ENCODE measurements at regions of chr1 and their contacts with region 1.

Region 1: GRCh38 chr1:247331172-247331991 is at the start of gene ZNF496:
- DNase-seq: peak; percentile 78
- H3K4me3 ChIP-seq: peak within 1 kb of the TSS; percentile 57 to 82 (median 73)
- H3K27ac ChIP-seq: peak within 1 kb of the TSS; percentile 86
- H3K4me1 ChIP-seq: peaks cover 17% of the 10 kb centered on the region
- H3K27me3 ChIP-seq: no peaks in the 10 kb centered on the region
- CTCF ChIP-seq: no peak
- POLR2A ChIP-seq: peak; percentile 37
- total RNA-seq, gene ZNF496: 42.4 and 46.0 TPM in 2 replicates

Region 2: GRCh38 chr1:245874942-245875580 is 1456.3 kb before region 1 on chr1:
- CTCF ChIA-PET with region 1: no interaction called
- POLR2A ChIA-PET with region 1: no interaction called
- dilution Hi-C with region 1: no loop called
- intact Hi-C with region 1: loop called (anchors 5 kb)
- DNase-seq: peak; percentile 95
- H3K4me3 ChIP-seq: no peak overlapping the region
- H3K27ac ChIP-seq: peak overlapping the region; percentile 50
- H3K4me1 ChIP-seq: peaks cover 22% of the 10 kb centered on the region
- H3K27me3 ChIP-seq: no peaks in the 10 kb centered on the region
- CTCF ChIP-seq: no peak
- POLR2A ChIP-seq: no peak

Region 3: GRCh38 chr1:246907472-246907871 is 423.9 kb before region 1 on chr1:
- CTCF ChIA-PET with region 1: no interaction called
- POLR2A ChIA-PET with region 1: no interaction called
- dilution Hi-C with region 1: no loop called
- intact Hi-C with region 1: loop called (anchors 5 kb)
- DNase-seq: peak; percentile 63
- H3K4me3 ChIP-seq: no peak overlapping the region
- H3K27ac ChIP-seq: no peak overlapping the region
- H3K4me1 ChIP-seq: no peaks in the 10 kb centered on the region
- H3K27me3 ChIP-seq: no peaks in the 10 kb centered on the region
- CTCF ChIP-seq: peak; percentile 15 to 33
- POLR2A ChIP-seq: no peak

Region 4: DNA sequence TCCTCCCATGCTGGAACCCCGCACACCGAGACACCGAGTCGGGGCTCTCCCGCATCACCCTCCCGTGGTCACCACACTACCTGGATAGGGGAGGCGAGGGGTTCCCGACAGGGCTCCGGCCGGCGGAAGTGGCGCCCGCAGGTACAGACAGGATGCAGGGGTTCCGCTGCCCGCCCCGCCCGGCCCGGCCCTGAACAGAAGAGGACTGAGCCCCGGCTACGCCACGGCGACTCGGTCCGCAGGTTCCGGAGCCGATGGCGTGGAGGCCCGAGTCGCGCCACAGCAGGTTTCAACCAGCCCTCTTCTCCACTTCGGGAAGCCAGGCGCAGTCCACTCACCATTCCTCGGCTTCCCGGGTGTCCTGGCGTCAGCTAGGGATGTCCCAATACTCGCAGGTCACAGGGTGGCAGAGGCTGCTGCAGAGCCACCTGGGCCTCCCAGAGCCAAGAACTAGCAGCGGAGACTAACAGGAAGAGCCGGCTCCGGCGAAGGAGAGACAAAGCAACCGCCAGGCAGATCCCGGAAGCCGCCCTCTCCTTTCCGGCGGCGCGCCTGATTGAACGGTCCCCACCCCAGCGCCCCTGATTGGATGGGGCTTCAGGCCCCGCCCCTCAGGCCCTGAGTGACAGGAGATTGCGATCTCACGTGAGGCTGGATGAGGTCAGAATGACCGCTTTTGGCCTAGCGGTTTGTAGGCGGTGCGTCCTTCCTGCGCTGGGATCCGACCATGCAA is 227.4 kb before region 1 on chr1 and contains the start of gene ZNF669:
- CTCF ChIA-PET with region 1: no interaction called
- POLR2A ChIA-PET with region 1: no interaction called
- dilution Hi-C with region 1: no loop called
- intact Hi-C with region 1: loop called (anchors 2 kb)
- DNase-seq: peak; percentile 95
- H3K4me3 ChIP-seq: peak within 1 kb of the TSS; percentile 91 to 98 (median 91)
- H3K27ac ChIP-seq: peak within 1 kb of the TSS; percentile 82
- H3K4me1 ChIP-seq: peaks cover 4% of the 10 kb centered on the region
- H3K27me3 ChIP-seq: no peaks in the 10 kb centered on the region
- CTCF ChIP-seq: no peak
- POLR2A ChIP-seq: peak; percentile 83
- total RNA-seq, gene ZNF669: 7.8 and 9.7 TPM in 2 replicates

Region 5: DNA sequence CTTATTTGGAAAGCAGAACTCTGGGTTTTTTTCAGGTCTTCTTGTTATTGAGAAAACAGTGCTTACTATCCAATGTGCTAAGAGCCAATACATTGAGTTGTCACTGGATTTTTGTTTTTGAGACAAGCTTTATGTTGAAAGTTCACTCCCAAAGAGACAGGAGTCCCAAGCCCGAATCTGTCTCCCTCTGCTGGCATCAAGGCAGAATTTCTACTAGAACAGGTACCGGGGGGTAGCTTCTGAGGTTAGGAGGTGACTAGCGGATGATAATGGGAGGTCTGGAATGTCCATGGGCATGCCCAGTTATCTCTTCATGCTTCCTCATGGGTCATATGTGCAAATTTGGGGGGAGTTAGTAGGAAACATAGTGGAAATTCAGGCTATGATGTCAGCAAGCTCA is 184.7 kb before region 1 on chr1:
- CTCF ChIA-PET with region 1: no interaction called
- POLR2A ChIA-PET with region 1: no interaction called
- dilution Hi-C with region 1: no loop called
- intact Hi-C with region 1: no loop called
- DNase-seq: no peak
- H3K4me3 ChIP-seq: no peak overlapping the region
- H3K27ac ChIP-seq: no peak overlapping the region
- H3K4me1 ChIP-seq: no peaks in the 10 kb centered on the region
- H3K27me3 ChIP-seq: no peaks in the 10 kb centered on the region
- CTCF ChIP-seq: peak; percentile 9 to 25
- POLR2A ChIP-seq: no peak

Region 6: GRCh38 chr1:247210376-247211117 is 120.8 kb before region 1 on chr1:
- CTCF ChIA-PET with region 1: no interaction called
- POLR2A ChIA-PET with region 1: no interaction called
- dilution Hi-C with region 1: no loop called
- intact Hi-C with region 1: loop called (anchors 1 kb)
- DNase-seq: peak; percentile 92
- H3K4me3 ChIP-seq: peak overlapping the region; percentile 72 to 90 (median 81)
- H3K27ac ChIP-seq: peak overlapping the region; percentile 92
- H3K4me1 ChIP-seq: peaks cover 10% of the 10 kb centered on the region
- H3K27me3 ChIP-seq: peaks cover 0 to 18% of the 10 kb centered on the region in 2 experiments
- CTCF ChIP-seq: no peak
- POLR2A ChIP-seq: peak; percentile 84

Region 7: GRCh38 chr1:247373721-247374141 is 42.3 kb after region 1 on chr1:
- CTCF ChIA-PET with region 1: interaction called, 12 read pairs
- POLR2A ChIA-PET with region 1: no interaction called
- dilution Hi-C with region 1: no loop called
- intact Hi-C with region 1: no loop called
- DNase-seq: peak; percentile 21
- H3K4me3 ChIP-seq: peak overlapping the region in 1 of 3 experiments; percentile 8
- H3K27ac ChIP-seq: no peak overlapping the region
- H3K4me1 ChIP-seq: no peaks in the 10 kb centered on the region
- H3K27me3 ChIP-seq: peaks cover 0 to 3% of the 10 kb centered on the region in 2 experiments
- CTCF ChIP-seq: peak; percentile 50 to 63
- POLR2A ChIP-seq: no peak

Region 8: DNA sequence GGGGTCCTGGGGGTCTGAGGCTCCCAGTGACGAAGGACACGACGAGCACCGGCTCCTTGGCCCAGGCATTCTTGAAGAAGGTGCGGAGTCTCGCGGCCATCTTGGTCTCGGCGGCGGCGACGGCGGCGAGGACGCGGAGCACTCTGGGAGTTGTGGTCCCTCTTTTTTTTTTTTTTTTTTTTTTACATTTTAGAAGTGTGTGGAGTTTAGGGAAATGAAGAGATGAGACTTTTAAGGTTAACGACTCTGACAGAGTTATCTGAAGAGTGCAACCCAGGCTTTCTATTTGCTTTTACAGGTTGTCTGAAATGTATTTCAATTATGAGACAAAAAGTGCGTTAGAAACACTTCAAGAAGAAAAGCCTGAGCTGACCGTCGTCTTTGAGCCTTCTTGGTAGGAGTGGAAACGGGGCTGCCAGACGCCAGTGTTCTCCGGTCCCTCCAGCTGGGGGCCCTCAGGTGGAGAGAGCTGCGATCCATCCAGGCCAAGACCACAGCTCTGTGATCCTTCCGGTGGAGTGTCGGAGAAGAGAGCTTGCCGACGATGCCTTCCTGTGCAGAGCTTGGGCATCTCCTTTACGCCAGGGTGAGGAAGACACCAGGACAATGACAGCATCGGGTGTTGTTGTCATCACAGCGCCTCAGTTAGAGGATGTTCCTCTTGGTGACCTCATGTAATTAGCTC is 116.9 kb after region 1 on chr1:
- CTCF ChIA-PET with region 1: no interaction called
- POLR2A ChIA-PET with region 1: no interaction called
- dilution Hi-C with region 1: no loop called
- intact Hi-C with region 1: loop called (anchors 1 kb)
- DNase-seq: peak; percentile 65
- H3K4me3 ChIP-seq: peak overlapping the region; percentile 27 to 58 (median 44)
- H3K27ac ChIP-seq: no peak overlapping the region
- H3K4me1 ChIP-seq: peaks cover 4% of the 10 kb centered on the region
- H3K27me3 ChIP-seq: no peaks in the 10 kb centered on the region
- CTCF ChIP-seq: no peak
- POLR2A ChIP-seq: no peak